HEK293 (cell line): ENCODE measurements at regions of chr14 and their contacts with region 1.

Region 1: DNA sequence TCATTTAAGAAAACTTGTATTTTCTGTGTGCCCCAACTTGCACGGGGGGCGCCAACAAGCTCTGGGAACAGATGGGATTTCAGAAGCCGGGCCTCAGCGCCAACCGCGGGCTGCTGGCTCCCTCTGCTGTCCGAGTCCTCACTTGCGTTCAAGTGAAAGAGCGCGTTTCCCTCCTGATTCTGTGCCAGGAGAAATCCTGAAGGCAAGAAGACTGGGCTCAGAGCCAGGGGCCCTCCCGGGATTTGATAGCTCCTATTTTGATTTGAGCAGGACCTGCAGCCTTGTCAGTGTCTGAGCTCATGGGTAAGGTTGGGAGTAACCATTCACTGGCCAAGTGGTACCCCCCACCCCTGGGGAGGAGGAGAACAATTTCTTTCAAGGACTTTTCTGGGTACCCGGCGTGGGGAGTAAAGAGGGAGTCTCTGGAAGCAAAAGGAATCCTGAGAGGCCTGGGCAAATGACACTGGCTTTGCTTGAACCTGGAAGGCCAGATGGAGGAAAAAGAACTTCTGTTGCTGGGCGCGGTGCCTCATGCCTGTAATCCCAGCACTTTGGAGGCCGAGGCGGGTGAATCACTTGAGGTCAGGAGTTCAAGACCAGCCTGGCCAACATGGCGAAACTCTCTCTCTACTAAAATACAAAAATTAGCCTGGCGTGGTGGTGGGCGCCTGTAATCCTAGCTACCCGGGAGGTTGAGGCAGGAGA is 179.0 kb upstream of the RGS6 start:
- H3K4me3 ChIP-seq: no peak overlapping the region
- H3K27ac ChIP-seq: no peak overlapping the region
- H3K4me1 ChIP-seq: 0 out of 2 replicates have a peak, but pooled peaks cover 2% of the 10 kb centered on the region
- CTCF ChIP-seq: peak; percentile 91

Region 2: DNA sequence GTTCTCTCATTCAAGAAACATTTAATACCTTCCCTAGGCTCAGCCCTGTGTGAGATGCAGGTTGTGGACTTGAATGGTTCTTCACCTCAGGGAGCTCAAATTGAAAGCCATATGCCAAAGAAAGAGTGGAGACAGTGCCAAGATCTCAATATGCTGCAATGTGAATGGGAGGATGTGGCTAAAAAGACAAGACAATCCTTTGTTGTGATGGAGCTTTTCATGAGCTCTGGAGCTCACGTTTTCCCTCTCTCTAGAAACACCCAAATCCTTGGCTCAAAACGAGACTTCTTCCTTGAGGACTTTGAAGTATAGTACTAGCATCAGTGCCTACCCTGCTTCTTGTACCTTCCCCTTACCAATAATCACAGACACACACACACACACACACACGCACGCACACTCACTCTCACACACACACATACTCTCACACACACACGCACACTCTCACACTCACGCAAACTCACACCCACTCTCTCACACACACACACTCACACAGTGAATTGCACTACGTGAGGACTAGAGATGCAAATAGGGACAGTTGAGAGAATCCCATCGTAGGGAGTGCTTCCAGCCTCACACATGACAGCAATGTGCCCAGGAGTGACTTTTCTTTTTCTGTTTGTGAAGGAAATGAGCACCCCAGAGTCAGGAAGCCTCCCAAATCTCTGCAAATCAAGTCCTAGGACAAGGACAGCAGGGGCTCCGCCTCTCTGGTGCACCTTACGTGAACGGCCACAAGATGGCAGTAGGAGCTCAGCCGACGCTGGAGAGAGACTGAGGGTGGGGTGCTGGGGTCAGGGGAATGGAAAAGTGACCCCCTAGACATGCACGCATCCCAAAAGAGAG is 614.6 kb before region 1 on chr14:
- CTCF ChIA-PET with region 1: interaction called, 30 read pairs
- POLR2A ChIA-PET with region 1: no interaction called
- H3K4me3 ChIP-seq: no peak overlapping the region
- H3K27ac ChIP-seq: no peak overlapping the region
- H3K4me1 ChIP-seq: no peaks in the 10 kb centered on the region
- CTCF ChIP-seq: peak; percentile 59

Region 3: GRCh38 chr14:71566276-71566675 is 187.0 kb before region 1 on chr14:
- CTCF ChIA-PET with region 1: no interaction called
- POLR2A ChIA-PET with region 1: no interaction called
- H3K4me3 ChIP-seq: no peak overlapping the region
- H3K27ac ChIP-seq: no peak overlapping the region
- H3K4me1 ChIP-seq: no peaks in the 10 kb centered on the region
- CTCF ChIP-seq: no peak

Region 4: DNA sequence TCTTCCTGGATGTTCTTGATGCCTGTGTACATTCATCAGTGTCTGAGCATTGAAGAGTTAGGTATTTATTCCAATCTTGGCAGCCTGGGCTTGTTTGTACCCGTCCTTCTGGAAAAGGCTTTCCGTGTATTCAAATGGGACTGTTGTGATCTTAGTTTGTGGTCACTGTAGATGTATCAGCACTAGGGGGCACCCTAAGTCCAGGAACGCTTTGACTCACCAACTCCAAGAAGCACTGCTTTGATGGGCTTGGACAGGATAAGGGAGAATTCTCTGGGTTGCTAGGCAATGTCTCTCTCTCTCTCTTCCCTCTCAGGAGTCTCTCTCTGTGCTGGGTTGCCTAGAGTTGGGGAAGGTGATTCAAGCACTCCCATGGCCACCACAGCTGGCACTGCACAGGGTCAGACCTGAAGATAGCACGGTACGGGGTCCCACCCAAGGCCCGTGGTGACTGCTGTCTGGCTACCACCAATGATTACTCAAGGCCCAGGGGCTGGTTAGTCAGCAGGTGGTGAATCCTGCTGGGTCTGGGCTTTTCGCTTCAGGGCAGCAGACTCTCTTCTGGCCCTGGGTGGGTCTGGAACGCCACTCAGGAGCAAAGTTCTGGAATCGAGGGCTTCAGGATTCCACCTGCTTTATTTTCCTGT is 32.2 kb before region 1 on chr14:
- CTCF ChIA-PET with region 1: interaction called, 23 read pairs
- POLR2A ChIA-PET with region 1: no interaction called
- H3K4me3 ChIP-seq: no peak overlapping the region
- H3K27ac ChIP-seq: no peak overlapping the region
- H3K4me1 ChIP-seq: no peaks in the 10 kb centered on the region
- CTCF ChIP-seq: peak; percentile 55